ENCODE measurements at regions of chr9 and their contacts with region 1.

Region 1: DNA sequence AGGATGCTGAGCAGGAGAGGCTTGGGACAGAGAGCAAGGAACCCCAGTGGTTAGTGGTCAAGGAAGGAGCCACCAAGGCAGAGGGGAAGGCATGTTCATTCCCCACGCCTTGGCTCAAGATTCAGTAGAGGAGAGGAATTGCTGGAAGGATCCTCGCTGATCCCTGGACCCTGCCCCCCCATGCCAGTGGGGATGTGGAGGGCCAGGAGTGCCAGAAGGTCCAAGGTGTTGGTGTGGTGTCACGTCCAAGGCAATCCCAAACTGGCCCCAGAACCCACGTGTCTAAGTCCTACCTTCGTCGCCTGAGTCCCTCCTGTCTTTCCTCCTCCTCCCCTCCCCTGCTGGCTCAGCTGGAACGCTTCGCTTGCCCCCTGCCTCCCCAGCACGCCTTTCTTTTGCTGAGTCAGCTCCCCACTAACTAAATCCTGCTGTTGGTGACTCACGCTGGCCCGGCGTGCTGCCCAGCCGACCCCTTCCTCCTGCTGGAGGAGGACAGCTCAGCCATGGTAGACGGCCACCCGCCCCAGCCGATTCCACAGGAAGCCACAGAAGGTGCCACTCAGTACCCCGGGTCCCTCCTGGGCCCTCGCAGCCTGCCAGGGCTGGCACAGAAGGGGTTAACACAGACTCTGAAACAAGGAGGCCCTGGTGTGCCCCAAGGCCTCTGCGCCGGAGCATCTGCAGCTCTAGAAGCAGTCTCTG is 37.6 kb upstream of the ORM1 start:
- DNase-seq: peak in 1 of 2 donors; percentile 84
- H3K4me3 ChIP-seq: no peak overlapping the region
- CTCF ChIP-seq: no peak
- POLR2A ChIP-seq: no peak

Region 2: DNA sequence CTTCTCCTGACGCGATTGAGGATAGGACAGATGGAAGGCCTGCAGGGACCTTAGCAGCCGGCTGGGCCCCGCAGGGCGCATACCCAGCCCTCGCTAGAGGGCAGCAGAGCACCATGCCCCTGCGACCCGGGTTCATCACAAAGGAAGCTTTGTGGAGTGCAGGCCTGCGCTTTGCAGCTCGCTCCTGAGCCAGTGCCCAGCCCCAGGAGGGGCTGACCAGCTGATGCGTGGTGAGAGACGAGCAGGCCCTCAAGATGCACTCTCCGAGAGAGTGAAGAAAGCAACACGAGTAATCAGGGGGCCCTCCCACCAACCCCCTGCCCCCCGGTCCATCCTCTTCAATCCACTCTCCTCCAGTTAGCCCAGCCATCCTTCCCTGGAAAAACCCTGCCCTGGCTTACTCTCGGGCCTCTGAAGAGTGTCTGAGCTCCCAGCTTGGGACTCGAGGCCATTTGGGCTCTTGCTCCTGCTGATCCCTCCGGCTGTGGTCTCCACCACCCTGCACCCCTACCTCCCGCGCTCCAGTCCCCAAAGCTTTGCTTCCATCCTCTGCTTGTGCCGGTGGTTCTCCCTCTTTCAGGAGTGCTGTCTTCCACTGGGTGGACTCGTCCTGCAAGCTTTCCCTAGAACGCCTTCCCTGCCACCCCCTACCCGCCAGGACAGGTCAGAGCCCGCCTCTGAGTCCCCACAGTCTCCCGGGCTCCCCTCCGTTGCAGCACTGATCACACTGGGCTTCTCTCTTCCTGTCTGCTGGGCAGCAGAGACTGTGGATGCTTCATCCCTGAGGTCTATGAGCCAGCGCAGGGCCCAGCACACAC is 177.1 kb before region 1 on chr9:
- intact Hi-C with region 1: loop called (anchors 5 kb)
- DNase-seq: peak; percentile 44 to 90
- H3K4me3 ChIP-seq: no peak overlapping the region
- CTCF ChIP-seq: peak in 1 of 3 donors; percentile 26
- POLR2A ChIP-seq: no peak

Region 3: DNA sequence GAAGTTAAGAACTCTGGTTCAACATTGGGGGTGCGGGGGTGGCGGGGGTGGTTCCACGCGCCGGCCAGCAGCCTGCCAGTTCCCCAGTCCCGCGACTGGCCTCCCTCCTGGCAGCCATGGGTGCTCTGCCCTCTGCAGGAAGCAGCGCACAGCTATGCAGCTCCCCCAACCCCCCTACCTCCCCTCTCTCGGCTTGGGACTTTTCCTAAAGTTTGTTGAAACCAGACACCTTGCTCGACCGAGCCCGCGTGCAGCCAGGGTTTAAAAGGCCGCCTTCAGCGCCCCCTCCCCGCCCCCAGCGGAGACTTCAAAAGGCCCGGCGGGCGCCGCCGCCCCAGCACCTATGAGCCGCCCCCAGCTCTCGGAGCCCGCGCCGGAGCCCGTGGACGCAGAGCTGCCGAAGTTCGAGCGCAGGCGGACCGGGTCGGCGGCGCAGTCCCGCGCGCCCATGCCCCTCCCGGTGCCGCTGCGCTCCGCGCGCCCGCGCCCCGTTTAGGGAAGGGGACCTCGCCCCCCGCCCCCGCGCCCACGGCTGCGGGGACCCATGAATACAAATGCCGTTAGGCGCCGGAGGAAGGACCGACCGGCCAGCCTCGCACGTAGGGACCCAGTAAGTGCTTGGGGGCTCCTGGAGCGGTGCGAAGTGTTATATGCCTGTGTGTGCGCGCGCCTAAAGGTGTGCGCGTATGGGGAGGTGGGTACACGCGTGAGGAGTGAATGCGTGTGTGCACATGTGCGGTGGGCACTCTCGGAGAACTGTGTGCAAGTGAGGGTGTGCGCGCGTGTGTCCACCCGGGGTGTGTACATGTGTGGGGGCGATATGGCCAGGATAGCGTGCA is 131.3 kb before region 1 on chr9:
- intact Hi-C with region 1: loop called (anchors 5 kb)
- DNase-seq: no peak
- H3K4me3 ChIP-seq: peak overlapping the region; percentile 4
- CTCF ChIP-seq: no peak
- POLR2A ChIP-seq: no peak